ENCODE measurements at regions of chr21 and their contacts with region 1.

Region 1: DNA sequence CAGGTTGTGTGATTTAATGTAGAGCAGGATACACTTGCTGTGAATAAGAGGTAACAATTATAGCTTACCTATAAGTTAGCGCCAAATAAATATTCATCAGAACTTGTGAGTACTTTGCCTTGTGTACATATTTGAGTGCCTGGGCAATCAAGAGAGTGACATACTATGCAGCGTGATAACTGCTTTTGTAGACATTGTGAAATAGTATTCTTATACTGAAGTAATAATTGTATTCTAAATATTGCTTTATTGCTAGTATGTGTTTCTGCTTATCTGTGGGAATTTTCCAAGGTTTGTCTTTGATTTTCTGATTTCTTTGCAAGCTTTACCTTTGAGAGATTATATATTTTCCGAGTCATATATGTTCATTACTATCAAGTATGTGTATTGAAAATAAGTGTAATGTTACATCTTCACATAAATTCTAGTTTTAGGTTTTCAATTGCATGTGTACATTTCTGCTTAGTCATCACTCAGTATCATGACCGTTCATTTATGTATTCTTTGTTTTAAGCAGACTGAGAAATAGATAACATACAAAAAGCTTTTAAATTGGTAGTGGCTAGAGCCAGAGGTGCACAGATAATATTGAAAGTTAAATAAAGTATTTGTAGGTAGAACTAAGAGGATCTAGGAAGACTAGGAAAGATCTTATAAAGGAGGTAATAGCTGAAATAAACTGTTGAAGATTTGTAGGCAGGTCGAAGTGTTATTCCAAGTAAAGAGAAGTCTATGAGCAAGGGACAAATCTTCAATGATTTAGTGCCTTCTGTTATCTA is 19.5 kb downstream of the USP25 start:
- DNase-seq: no peak
- H3K4me3 ChIP-seq: no peak overlapping the region
- H3K4me3 Mint-ChIP-seq: peak overlapping the region in 4 of 8 donors; percentile 7 to 33 (median 18)
- H3K27ac ChIP-seq: no peak overlapping the region
- H3K27ac Mint-ChIP-seq: peak overlapping the region in 1 of 7 donors; percentile 30
- H3K4me1 ChIP-seq: peaks cover 51% of the 10 kb centered on the region
- H3K4me1 Mint-ChIP-seq: peaks cover 44 to 91% (median 65%) of the 10 kb centered on the region in 4 donors
- H3K27me3 ChIP-seq: no peaks in the 10 kb centered on the region
- H3K27me3 Mint-ChIP-seq: no peaks in the 10 kb centered on the region

Region 2: DNA sequence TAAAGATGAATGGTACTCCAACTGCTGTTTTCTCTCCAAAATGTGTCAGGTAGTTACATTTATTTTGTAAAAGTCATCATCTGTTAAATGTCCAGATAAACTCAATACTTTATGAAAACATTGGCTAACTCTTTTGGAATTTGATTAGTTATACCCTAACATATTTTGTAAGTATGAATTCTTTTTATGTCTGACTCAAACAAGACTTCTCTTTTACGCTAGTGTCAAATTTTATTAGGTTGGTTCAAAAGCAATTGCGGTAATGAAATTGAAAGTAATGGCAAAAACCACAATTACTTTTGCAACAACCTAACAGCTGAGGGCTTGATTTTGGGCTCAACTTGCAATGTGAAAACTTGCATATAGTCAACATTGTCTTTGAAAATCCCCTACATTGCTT is 60.5 kb before region 1 on chr21:
- CTCF ChIA-PET with region 1: no interaction called
- POLR2A ChIA-PET with region 1: no interaction called
- intact Hi-C with region 1: no loop called
- DNase-seq: peak in 2 of 5 donors; percentile 3 to 11
- H3K4me3 ChIP-seq: no peak overlapping the region
- H3K4me3 Mint-ChIP-seq: peak overlapping the region in 2 of 8 donors; percentile 4 to 5
- H3K27ac ChIP-seq: no peak overlapping the region
- H3K27ac Mint-ChIP-seq: no peak overlapping the region
- H3K4me1 ChIP-seq: peaks cover 5% of the 10 kb centered on the region
- H3K4me1 Mint-ChIP-seq: peaks cover 3 to 7% (median 6%) of the 10 kb centered on the region in 4 donors
- H3K27me3 ChIP-seq: no peaks in the 10 kb centered on the region
- H3K27me3 Mint-ChIP-seq: peaks cover 2 to 5% of the 10 kb centered on the region in 2 donors

Region 3: GRCh38 chr21:15735409-15735808 is 13.9 kb before region 1 on chr21:
- CTCF ChIA-PET with region 1: no interaction called
- POLR2A ChIA-PET with region 1: interaction called, 11 read pairs
- intact Hi-C with region 1: loop called (anchors 1 kb)
- DNase-seq: no peak
- H3K4me3 ChIP-seq: no peak overlapping the region
- H3K4me3 Mint-ChIP-seq: peak overlapping the region in 7 of 8 donors; percentile 47 to 79 (median 68)
- H3K27ac ChIP-seq: no peak overlapping the region
- H3K27ac Mint-ChIP-seq: peak overlapping the region; percentile 52 to 92 (median 83)
- H3K4me1 ChIP-seq: peaks cover 89% of the 10 kb centered on the region
- H3K4me1 Mint-ChIP-seq: peaks cover 57 to 93% (median 74%) of the 10 kb centered on the region in 4 donors
- H3K27me3 ChIP-seq: no peaks in the 10 kb centered on the region
- H3K27me3 Mint-ChIP-seq: no peaks in the 10 kb centered on the region

Region 4: GRCh38 chr21:15781806-15782705 is 32.8 kb after region 1 on chr21:
- CTCF ChIA-PET with region 1: no interaction called
- POLR2A ChIA-PET with region 1: no interaction called
- intact Hi-C with region 1: loop called (anchors 5 kb)
- DNase-seq: no peak
- H3K4me3 ChIP-seq: no peak overlapping the region
- H3K4me3 Mint-ChIP-seq: peak overlapping the region in 1 of 8 donors; percentile 35
- H3K27ac ChIP-seq: no peak overlapping the region
- H3K27ac Mint-ChIP-seq: no peak overlapping the region
- H3K4me1 ChIP-seq: peaks cover 13% of the 10 kb centered on the region
- H3K4me1 Mint-ChIP-seq: peaks cover 28 to 59% (median 44%) of the 10 kb centered on the region in 4 donors
- H3K27me3 ChIP-seq: no peaks in the 10 kb centered on the region
- H3K27me3 Mint-ChIP-seq: no peaks in the 10 kb centered on the region

Region 5: GRCh38 chr21:16426936-16427335 is 677.7 kb after region 1 on chr21:
- CTCF ChIA-PET with region 1: no interaction called
- POLR2A ChIA-PET with region 1: no interaction called
- intact Hi-C with region 1: no loop called
- DNase-seq: no peak
- H3K4me3 ChIP-seq: no peak overlapping the region
- H3K4me3 Mint-ChIP-seq: no peak overlapping the region
- H3K27ac ChIP-seq: no peak overlapping the region
- H3K27ac Mint-ChIP-seq: no peak overlapping the region
- H3K4me1 ChIP-seq: no peaks in the 10 kb centered on the region
- H3K4me1 Mint-ChIP-seq: no peaks in the 10 kb centered on the region
- H3K27me3 ChIP-seq: no peaks in the 10 kb centered on the region
- H3K27me3 Mint-ChIP-seq: no peaks in the 10 kb centered on the region

Region 6: DNA sequence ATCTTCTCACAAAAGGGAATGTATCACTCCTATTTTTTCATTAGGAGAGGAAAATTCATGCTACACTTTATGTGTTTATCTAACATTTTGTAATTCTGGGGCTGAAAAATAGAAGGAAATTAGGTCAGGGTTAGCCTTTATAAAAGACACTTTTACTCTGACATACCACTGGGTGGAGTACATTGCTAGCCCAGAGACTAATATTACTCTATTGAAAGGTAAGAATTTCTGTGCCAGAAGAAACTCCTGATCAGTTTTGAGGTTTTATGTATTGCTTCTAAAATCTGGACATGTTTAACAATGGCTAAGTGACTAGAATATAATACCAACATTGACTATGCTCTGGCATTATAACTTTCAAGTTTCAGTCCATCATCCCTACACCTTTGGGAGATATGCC is 705.1 kb after region 1 on chr21:
- CTCF ChIA-PET with region 1: no interaction called
- POLR2A ChIA-PET with region 1: no interaction called
- intact Hi-C with region 1: no loop called
- DNase-seq: no peak
- H3K4me3 ChIP-seq: no peak overlapping the region
- H3K4me3 Mint-ChIP-seq: no peak overlapping the region
- H3K27ac ChIP-seq: no peak overlapping the region
- H3K27ac Mint-ChIP-seq: no peak overlapping the region
- H3K4me1 ChIP-seq: no peaks in the 10 kb centered on the region
- H3K4me1 Mint-ChIP-seq: no peaks in the 10 kb centered on the region
- H3K27me3 ChIP-seq: no peaks in the 10 kb centered on the region
- H3K27me3 Mint-ChIP-seq: no peaks in the 10 kb centered on the region

Measured in CD4-positive, alpha-beta memory T cell (primary cell).